Gastrocnemius medialis (tissue), 4 donors: ENCODE measurements at regions of chr6 and their contacts with region 1.

Region 1: GRCh38 chr6:7051233-7052114 is 56.3 kb upstream of the RREB1 start:
- DNase-seq: peak; percentile 35 to 70
- ATAC-seq: peak; percentile 68 to 73
- H3K4me3 ChIP-seq: peak overlapping the region; percentile 66 to 77 (median 67)
- H3K27ac ChIP-seq: peak overlapping the region; percentile 84 to 91 (median 87)
- H3K4me1 ChIP-seq: peaks cover 7 to 18% of the 10 kb centered on the region in 2 donors
- H3K27me3 ChIP-seq: no peaks in the 10 kb centered on the region
- CTCF ChIP-seq: no peak
- POLR2A ChIP-seq: peak in 1 of 2 donors; percentile 31

Region 2: GRCh38 chr6:6724539-6725467 is 326.7 kb before region 1 on chr6:
- in situ Hi-C with region 1: no loop called
- intact Hi-C with region 1: loop called (anchors 5 kb)
- DNase-seq: peak; percentile 48 to 69
- ATAC-seq: peak; percentile 93 to 94
- H3K4me3 ChIP-seq: peak overlapping the region; percentile 51 to 65 (median 60)
- H3K27ac ChIP-seq: peak overlapping the region; percentile 84 to 90 (median 86)
- H3K4me1 ChIP-seq: peaks cover 18 to 19% of the 10 kb centered on the region in 2 donors
- H3K27me3 ChIP-seq: no peaks in the 10 kb centered on the region
- CTCF ChIP-seq: peak; percentile 66 to 81 (median 74)
- POLR2A ChIP-seq: no peak

Region 3: GRCh38 chr6:6826095-6826901 is 225.2 kb before region 1 on chr6:
- in situ Hi-C with region 1: no loop called
- intact Hi-C with region 1: loop called (anchors 10 kb)
- DNase-seq: peak; percentile 88 to 95
- ATAC-seq: peak; percentile 73 to 82
- H3K4me3 ChIP-seq: peak overlapping the region; percentile 32 to 50 (median 39)
- H3K27ac ChIP-seq: peak overlapping the region; percentile 95 to 98 (median 98)
- H3K4me1 ChIP-seq: peaks cover 25 to 31% of the 10 kb centered on the region in 2 donors
- H3K27me3 ChIP-seq: no peaks in the 10 kb centered on the region
- CTCF ChIP-seq: no peak
- POLR2A ChIP-seq: peak; percentile 59 to 70

Region 4: GRCh38 chr6:7086488-7086887 is 35.0 kb after region 1 on chr6:
- in situ Hi-C with region 1: no loop called
- intact Hi-C with region 1: no loop called
- DNase-seq: peak; percentile 12 to 33
- ATAC-seq: peak; percentile 35 to 49
- H3K4me3 ChIP-seq: peak overlapping the region; percentile 10 to 29 (median 20)
- H3K27ac ChIP-seq: peak overlapping the region; percentile 52 to 64 (median 57)
- H3K4me1 ChIP-seq: peaks cover 20 to 24% of the 10 kb centered on the region in 2 donors
- H3K27me3 ChIP-seq: no peaks in the 10 kb centered on the region
- CTCF ChIP-seq: no peak
- POLR2A ChIP-seq: no peak

Region 5: DNA sequence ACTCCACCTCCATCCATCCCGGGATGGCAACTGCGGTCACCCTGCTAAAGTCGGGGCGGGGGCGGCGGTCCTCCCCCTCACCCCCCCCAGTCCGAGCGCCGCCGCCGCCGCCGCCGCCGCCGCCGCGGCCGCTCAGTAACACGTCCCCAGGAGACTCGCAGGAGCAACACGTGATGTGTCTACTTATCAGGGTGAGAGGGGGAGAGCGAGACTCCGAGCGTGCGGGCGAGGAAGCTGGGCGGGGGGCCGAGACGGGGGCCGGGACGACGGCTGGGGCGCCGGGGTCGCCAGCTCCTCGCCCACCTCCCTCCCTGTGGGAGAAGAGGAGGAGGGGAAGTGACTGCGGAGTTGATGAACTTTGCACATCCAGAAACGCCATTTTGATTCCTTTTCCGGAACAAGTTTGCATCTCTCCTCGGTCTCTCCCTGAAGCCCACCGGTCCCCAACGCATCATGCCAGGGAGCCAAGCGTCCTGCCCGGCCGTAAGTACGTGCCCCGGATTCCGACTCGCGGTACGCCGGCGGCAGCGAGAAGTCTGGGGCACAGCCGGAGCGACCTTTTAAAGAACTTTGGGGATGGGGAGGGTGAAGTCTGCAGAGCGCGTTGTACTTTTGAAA is 56.2 kb after region 1 on chr6 and contains the start of gene RREB1:
- in situ Hi-C with region 1: no loop called
- intact Hi-C with region 1: loop called (anchors 2 kb)
- DNase-seq: peak; percentile 64 to 71
- ATAC-seq: peak; percentile 82 to 85
- H3K4me3 ChIP-seq: peak within 1 kb of the TSS; percentile 93 to 98 (median 96)
- H3K27ac ChIP-seq: peak within 1 kb of the TSS; percentile 85 to 96 (median 94)
- H3K4me1 ChIP-seq: peaks cover 17 to 22% of the 10 kb centered on the region in 2 donors
- H3K27me3 ChIP-seq: no peaks in the 10 kb centered on the region
- CTCF ChIP-seq: no peak
- POLR2A ChIP-seq: peak; percentile 85 to 91
- total RNA-seq, gene RREB1: 18.0 to 41.3 (median 39.2) TPM

Region 6: DNA sequence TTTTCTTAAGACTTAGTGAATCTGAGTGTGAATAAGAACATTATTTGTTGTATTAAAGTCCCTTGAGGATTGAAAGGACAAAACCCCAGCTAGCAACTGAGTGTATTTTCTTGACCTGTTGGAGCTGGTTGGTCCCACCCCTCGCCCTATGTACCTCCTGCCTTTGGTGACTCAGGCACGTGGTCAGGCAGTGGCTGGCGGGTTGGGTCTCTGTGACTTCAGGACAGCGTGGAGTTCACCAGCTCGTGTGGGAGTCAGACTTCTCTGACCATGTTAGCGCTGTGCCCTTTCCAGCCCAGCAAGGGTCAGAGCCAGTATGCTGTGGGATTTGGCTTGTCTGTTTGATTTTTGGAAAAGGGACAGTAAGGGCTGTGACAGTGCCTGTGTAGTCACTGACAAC is 167.8 kb after region 1 on chr6:
- in situ Hi-C with region 1: no loop called
- intact Hi-C with region 1: loop called (anchors 5 kb)
- DNase-seq: peak in 1 of 2 donors; percentile 65
- ATAC-seq: peak; percentile 9 to 10
- H3K4me3 ChIP-seq: no peak overlapping the region
- H3K27ac ChIP-seq: peak overlapping the region; percentile 85 to 95 (median 94)
- H3K4me1 ChIP-seq: peaks cover 65% of the 10 kb centered on the region in 2 donors
- H3K27me3 ChIP-seq: no peaks in the 10 kb centered on the region
- CTCF ChIP-seq: no peak
- POLR2A ChIP-seq: no peak